Heart right ventricle (tissue), 16 donors: ENCODE measurements at regions of chr11 and their contacts with region 1.

Region 1: DNA sequence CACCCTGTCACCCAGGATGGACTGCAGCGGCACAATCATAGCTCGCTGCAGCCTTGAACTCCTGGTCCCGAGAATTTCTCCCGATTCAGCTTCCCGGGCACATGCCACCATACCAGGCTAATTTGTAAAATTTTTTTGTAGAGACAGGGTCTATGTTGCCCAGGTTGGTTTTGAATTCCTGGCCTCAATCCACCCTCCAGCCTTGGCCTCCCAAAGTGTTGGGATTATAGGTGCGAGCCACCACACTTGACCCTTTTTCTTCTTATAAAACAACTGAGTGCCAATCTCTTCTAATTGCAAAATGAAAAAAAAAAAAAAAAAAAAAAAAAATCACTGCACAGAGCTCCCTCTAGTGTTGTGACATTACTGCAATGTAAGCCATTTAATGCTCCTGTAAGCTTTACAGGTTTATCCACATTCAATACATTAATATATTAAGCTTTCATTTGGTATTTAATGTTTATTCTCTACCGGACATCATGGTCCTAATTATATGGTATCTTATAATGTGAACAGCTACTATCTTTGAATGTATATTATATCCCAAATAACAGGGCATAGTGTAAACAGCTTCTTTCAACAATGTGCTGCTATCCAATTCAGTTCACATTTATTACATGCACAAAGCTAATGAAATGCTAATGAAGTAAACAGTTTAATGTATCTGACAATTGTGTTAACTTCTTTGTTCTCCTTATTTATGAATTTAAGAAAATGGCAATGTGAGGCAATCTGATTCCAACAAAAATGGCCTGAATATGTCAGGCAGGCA is 44.6 kb downstream of the COPB1 start:
- DNase-seq: no peak
- ATAC-seq: peak in 6 of 8 donors; percentile 39 to 56 (median 50)
- H3K4me3 ChIP-seq: no peak overlapping the region
- H3K27ac ChIP-seq: peak overlapping the region in 2 of 10 donors; percentile 3 to 36
- H3K4me1 ChIP-seq: peaks cover 0 to 12% (median 0%) of the 10 kb centered on the region in 9 donors
- H3K27me3 ChIP-seq: no peaks in the 10 kb centered on the region
- CTCF ChIP-seq: peak; percentile 31 to 76 (median 64)

Region 2: DNA sequence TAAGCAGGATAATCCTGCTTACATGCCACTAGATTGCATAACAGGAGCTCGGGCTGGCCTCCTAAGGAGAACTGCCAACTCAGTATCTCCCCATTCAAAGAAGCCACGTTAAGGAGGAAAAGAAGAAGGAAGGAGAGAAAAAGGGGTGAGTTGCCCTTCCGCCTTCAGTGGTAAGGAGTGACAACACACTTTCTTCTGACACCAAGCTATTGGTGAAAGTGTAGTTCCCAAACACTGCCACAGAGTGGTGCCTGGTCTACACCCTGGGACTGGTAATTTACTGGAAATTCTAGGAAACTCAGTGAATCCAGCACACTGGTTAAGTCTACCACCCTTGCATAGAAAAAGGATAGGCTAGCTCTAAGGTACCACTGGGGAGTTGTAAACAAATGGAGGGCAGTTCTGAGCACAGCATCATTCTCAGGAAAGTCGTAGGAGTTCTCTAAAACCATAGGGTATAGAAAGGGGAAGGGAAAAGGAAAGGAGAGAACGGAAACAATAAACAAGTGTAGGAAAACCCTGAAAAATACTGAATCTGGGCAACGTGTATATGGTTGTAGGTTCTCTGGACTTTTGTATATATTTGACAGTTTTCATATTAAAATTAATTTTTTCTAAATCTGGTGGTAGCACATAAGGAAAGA is 154.3 kb before region 1 on chr11:
- intact Hi-C with region 1: loop called (anchors 1 to 10 kb)
- DNase-seq: peak in 1 of 2 donors; percentile 52
- ATAC-seq: peak; percentile 80 to 93 (median 87)
- H3K4me3 ChIP-seq: no peak overlapping the region
- H3K27ac ChIP-seq: no peak overlapping the region
- H3K4me1 ChIP-seq: peaks cover 0 to 42% (median 18%) of the 10 kb centered on the region in 9 donors
- H3K27me3 ChIP-seq: no peaks in the 10 kb centered on the region
- CTCF ChIP-seq: peak; percentile 65 to 85 (median 77)

Region 3: DNA sequence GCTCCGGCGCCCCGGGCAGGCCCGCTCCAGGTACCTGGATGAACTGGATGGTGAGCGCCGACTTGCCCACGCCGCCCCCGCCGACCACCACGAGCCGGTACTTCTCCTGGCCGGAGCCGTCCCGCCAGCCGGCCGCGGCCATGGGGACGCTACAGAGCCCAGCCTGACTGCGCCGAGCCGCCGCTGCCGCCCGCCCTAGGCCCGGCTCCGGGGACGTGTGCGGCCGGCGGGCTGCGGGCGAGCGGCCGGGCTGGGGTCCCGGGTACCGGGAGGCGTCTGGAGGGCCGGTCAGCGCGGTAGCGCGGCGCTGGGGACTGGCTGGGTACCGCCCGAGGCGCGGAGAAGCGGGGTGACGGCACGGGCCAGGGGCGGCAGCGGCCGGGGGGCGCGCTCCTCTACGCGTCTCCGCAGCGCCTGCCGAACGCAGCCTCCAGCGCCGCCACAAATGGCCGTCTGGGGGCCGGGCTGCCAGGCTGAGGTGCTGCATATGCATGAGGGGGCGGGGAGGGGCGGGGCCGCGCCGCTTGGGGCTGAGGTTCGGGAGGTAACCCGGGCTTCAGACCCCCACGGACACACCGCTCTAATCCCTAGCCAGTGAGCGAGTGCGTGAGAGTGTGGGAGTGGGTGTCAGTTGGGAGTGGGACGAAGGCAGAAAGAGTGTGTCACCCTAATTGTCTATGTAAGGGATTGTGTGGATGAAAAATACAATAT is 96.2 kb before region 1 on chr11 and contains the start of gene RRAS2:
- intact Hi-C with region 1: loop called in 1 of 10 experiments (anchors 10 kb)
- DNase-seq: peak; percentile 71 to 77
- ATAC-seq: peak; percentile 88 to 92 (median 90)
- H3K4me3 ChIP-seq: peak within 1 kb of the TSS; percentile 53 to 94 (median 84)
- H3K27ac ChIP-seq: peak within 1 kb of the TSS; percentile 46 to 91 (median 84)
- H3K4me1 ChIP-seq: peaks cover 0 to 33% (median 13%) of the 10 kb centered on the region in 9 donors
- H3K27me3 ChIP-seq: peaks cover 0 to 28% (median 0%) of the 10 kb centered on the region in 7 donors
- CTCF ChIP-seq: peak in 1 of 9 donors; percentile 17
- total RNA-seq, gene RRAS2: 21.8 to 142 (median 52.9) TPM

Region 4: DNA sequence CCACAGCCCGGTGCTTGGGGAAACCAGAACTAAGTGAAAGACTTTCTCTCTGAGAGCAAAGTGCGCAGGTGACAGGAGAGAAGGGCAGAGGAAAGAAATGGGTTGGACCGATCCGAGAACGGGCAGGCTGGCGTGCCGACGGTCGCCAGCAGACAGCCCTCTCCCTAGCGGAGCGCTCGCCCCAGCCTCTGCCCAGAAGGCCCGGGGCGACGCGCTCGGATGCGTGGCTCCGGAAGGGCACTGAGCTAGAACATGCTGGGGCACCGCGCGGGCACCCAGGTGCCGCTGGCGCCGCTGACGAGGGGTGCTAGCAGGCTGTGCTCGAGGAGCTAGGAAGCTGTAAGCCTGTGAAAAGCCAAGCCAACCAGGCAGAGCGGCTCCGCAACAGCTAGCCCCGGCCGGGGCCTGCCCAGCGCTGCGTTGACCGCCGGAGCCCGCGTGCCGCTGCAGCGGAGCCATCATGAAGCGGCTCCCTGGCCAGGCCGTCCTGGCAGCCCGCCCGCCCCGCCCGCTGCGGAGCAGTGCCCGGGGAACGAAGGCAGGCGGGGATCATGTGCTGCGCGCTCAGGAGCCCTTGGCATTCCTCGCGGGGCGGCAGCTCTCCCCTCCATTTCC is 74.0 kb before region 1 on chr11:
- intact Hi-C with region 1: loop called in 1 of 10 experiments (anchors 10 kb)
- DNase-seq: peak; percentile 71 to 80
- ATAC-seq: peak; percentile 92 to 96 (median 95)
- H3K4me3 ChIP-seq: peak overlapping the region in 9 of 10 donors; percentile 36 to 63 (median 56)
- H3K27ac ChIP-seq: peak overlapping the region; percentile 62 to 92 (median 80)
- H3K4me1 ChIP-seq: peaks cover 0 to 25% (median 10%) of the 10 kb centered on the region in 9 donors
- H3K27me3 ChIP-seq: peaks cover 0 to 42% (median 0%) of the 10 kb centered on the region in 7 donors
- CTCF ChIP-seq: peak in 2 of 9 donors; percentile 17 to 33

Region 5: DNA sequence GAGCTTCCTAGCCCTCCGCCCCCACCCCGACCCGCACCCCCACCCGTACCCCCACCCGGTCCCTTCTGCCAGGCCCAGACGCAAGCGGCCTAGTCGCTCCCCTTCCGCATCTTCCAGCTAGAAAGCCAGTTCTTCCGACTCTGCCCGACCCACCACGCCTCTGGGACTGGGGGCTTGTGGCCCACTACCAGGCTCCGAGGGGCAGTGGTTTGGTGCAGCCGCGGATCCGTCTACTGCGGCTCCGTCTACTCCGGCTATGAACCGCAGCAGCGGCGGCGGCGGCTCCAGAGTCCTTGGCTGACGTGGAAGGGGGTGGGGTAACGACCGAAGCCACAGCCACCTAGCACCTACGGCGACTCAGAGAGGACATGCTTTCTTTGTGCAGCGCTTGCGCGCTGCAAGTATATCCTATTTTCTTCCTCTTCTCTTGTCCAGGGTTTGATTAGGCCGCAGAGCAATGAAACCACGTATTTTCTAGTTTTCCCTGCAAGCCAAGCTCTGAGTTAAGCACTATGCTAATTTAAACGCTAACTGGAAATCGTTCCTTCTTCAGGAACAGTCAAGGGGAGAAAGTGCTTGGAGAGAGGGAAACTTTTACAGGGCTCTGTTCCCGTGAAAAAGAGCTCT is 44.6 kb after region 1 on chr11 and contains the start of gene COPB1:
- intact Hi-C with region 1: loop called in 2 of 10 experiments (anchors 5 kb)
- DNase-seq: peak; percentile 89 to 96
- ATAC-seq: peak; percentile 99 to 100 (median 99)
- H3K4me3 ChIP-seq: peak within 1 kb of the TSS; percentile 72 to 84 (median 78)
- H3K27ac ChIP-seq: peak within 1 kb of the TSS; percentile 67 to 94 (median 91)
- H3K4me1 ChIP-seq: peaks cover 0 to 53% (median 30%) of the 10 kb centered on the region in 9 donors
- H3K27me3 ChIP-seq: no peaks in the 10 kb centered on the region
- CTCF ChIP-seq: no peak
- total RNA-seq, gene COPB1: 40.2 to 60.0 (median 47.9) TPM